Posterior vena cava (tissue), 2 donors: ENCODE measurements at regions of chr3 and their contacts with region 1.

Region 1: DNA sequence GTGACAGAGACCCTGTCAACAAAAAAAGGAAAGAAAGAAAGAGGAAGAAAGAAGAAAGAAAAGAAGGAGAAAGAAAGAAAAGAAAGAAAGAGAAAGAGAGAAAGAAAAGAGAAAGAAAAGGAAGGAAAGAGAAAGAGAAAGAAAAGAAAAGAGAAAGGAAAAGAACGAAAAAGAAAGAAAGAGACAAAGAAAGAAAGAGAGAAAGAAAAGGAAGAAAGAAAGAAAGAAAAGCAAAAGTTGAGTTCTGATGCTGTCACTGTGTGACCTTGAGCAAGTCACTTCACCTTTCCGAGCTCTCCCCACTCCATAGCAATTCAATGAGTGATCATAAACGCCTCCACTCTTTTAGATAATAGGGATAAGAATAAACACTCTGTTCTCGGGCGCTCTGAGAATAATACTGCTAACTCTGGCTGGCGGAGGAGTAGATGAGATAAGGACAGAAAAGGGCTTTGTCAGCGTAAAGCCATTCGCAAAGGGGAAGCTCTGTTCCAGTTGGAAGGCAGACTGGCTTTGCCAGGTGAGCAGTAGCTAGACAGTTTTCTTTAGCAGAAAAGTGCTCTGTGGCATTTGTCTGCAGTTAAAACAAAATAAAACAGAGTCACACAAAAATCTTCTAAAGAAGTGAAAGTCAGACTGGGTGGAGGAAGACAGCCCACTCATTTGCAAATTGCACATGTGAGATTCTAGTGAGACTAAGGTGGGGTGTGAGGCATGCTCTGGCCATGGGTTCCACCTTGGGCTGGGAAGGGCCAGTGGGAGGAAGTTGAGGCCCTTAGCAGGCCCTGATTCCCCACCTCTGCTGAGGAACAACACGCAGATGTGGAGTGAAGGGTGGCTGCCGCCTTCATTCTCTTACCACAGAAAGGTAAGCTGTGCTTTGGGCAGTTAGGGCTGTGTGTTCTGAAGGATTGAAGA is 9.6 kb upstream of the FLNB start:
- DNase-seq: no peak

Region 2: DNA sequence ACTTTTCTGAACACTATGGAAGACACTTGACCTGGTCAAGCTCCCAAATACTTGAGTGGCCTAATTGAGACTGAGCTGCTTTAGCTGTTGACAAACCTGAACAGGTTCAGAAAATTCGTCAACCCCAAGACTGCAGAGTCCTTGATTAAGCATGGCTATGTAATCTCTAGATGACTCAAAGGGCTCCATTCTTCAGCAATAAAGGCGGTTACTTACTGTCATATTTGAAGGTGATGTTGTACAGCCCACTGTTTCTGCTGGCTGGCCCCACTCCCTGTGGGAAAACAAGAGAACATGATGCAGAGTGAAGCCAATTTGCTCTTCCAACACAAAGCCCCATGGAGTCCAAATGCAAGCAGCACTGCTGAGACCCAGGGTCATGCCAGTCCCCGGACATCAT is 878.6 kb before region 1 on chr3:
- intact Hi-C with region 1: loop called in 1 of 2 experiments (anchors 5 kb)
- DNase-seq: no peak

Region 3: DNA sequence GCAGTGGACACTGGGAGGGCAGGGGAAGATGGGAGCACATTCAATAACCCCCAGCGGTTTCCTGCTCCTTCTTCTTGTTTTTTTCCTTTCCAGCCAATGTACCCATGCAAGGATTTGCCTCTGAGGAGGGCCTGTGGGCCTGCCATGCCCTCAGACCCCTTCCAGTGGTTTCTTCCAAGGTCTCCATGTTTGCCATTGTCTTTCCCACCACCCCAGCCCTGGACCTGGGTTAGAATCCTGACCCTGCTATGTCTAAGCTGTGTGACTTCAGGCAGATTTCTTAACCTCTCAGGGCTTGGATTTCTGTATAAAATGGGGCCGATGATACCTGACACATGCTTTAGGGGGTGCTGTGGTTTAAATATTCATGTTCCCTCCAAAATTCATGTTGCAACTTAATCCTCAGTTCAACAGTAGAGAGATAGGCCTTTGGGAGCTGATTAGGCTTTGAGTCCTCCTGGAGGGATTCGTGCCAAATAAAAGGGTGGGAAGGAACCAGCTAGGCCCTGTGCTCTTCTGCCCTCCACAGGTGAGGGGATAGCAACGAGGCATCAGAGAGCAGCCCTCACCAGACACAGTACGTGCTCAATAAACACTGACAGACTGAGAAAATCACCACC is 36.7 kb before region 1 on chr3:
- intact Hi-C with region 1: loop called in 1 of 2 experiments (anchors 5 kb)
- DNase-seq: no peak